PC-3 (cell line): ENCODE measurements at regions of chr18 and their contacts with region 1.

Region 1: DNA sequence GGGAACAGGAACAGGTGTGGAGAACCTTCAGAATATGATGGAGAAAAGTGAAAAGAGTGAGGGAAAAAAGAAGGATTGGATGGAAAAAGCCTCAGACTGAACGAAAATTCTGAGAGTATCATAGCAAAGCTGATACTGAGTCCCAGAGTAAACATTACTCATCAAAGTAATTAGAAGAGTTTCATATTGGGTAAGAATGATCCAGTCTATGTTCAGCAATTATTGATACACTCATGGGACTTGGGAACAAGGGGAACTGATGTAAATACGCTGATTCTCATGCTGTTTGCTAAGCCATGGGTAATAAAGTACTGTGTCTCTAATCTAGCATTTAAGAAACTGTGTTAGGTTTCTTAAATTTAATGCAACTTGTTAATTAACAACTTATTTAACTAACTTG is 219.9 kb upstream of the NOL4 start:
- DNase-seq: peak; percentile 2
- ATAC-seq: no peak; the same call in 1 of the 2 replicates
- H3K4me3 ChIP-seq: no peak overlapping the region
- H3K27ac ChIP-seq: no peak overlapping the region
- H3K4me1 ChIP-seq: peaks cover 8% of the 10 kb centered on the region; the same call in 1 of the 2 replicates
- H3K27me3 ChIP-seq: no peaks in the 10 kb centered on the region
- CTCF ChIP-seq: no peak

Region 2: GRCh38 chr18:34431042-34431441 is 13.6 kb before region 1 on chr18:
- CTCF ChIA-PET with region 1: interaction called, 12 read pairs
- POLR2A ChIA-PET with region 1: no interaction called
- intact Hi-C with region 1: no loop called
- DNase-seq: no peak
- ATAC-seq: no peak; the same call in 1 of the 2 replicates
- H3K4me3 ChIP-seq: no peak overlapping the region
- H3K27ac ChIP-seq: no peak overlapping the region
- H3K4me1 ChIP-seq: no peaks in the 10 kb centered on the region; the same call in 1 of the 2 replicates
- H3K27me3 ChIP-seq: no peaks in the 10 kb centered on the region
- CTCF ChIP-seq: no peak